ENCODE measurements at regions of chr10 and their contacts with region 1.

Region 1: GRCh38 chr10:88064608-88065382 is 201.4 kb downstream of the PTEN start:
- DNase-seq: peak; percentile 38
- CTCF ChIP-seq: no peak

Region 2: DNA sequence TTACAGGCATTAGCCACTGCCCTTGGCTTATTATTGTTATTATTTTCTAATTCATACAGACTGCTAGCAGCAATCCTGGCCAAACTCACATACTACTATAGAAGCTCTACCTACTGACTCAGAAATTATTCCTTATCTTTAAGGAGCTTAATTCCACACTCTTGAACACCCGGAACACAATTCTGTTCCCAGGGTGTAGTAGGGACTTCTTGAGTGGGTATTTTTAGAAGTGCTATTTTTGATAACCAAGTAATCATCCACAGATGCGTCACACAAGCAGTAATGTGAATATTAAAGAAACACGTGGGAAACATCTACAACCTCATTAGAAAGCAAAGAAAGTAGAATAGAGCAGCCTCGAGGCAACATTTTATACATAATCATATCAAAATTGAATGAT is 52.2 kb before region 1 on chr10:
- CTCF ChIA-PET with region 1: no interaction called
- POLR2A ChIA-PET with region 1: no interaction called
- DNase-seq: no peak
- CTCF ChIP-seq: no peak

Region 3: GRCh38 chr10:88032566-88032965 is 32.2 kb before region 1 on chr10:
- CTCF ChIA-PET with region 1: no interaction called
- POLR2A ChIA-PET with region 1: no interaction called
- DNase-seq: no peak
- CTCF ChIP-seq: no peak

Region 4: GRCh38 chr10:88052779-88053178 is 12.0 kb before region 1 on chr10:
- CTCF ChIA-PET with region 1: interaction called, 17 read pairs
- POLR2A ChIA-PET with region 1: no interaction called
- DNase-seq: no peak
- CTCF ChIP-seq: no peak

Region 5: DNA sequence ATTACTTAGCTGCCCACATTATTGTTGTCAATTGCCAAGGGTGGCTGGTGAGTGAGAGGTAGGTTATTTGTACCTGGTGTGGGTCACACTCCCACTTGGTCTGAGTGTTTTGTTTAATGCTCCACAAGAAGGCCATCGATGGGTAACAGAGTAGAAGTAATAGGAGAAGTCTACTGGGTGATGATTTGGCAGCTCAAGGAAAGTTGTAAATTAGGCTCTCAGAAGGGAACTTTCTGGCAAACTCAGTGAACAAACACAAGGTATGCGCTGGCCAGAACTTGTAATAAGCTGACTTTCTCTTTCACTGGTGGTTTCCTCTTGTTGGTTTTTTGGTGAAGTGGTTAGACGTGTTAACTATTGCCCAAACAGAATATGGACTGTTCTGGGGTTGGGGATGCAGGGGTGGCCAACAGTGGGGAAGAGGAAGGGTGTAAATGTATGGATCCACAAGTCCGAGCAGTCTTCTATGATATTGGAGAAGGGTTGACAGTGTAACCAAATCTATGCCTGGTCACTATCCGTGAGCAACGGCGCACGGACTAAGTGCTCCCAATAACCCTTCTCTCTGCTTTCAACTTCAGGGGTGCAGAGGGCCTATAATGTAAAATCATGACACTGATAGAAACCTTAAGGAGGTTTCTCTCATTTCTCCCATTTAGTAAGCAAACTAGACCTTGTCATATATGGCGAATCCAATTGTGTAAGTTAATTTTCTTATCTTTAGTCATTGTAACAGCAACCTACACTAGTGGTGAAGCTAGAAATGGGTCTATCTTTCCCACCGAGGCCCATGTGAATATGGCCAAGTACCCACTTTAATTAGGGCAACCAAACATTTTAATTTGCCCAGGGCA is 11.5 kb after region 1 on chr10:
- CTCF ChIA-PET with region 1: interaction called, 19 read pairs
- POLR2A ChIA-PET with region 1: no interaction called
- DNase-seq: no peak
- CTCF ChIP-seq: no peak

Region 6: DNA sequence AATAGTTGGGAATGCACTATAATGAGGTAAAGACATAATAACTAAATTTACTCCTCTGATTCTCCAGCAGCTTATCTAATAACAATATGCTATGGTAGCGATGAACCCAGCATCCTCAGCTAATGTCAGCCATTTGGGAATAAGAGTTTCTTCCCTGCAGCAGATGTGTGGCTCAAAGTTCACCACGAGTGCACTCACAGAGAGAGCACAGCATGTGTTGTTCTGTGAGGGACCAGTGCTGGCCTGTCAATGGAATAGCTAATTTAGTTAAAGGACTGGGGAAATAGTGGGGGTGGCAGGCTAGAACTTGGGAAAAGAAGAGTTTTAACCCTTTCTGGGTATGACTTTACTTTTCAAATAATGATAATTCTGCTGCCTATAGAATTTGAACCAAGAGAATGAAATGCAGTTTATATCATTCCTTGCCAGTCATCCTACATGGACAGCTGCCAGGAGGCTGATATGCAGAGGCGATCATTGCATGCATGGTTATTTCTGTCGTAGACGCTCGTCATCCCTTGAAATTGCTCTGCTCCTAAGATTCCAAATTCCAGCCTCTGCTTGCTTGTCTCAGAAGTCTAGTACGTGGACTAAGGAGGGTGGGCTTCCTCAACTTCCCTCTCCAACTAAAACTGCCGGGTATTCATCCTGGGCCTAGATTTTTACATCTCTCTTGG is 162.7 kb after region 1 on chr10:
- CTCF ChIA-PET with region 1: no interaction called
- POLR2A ChIA-PET with region 1: no interaction called
- DNase-seq: no peak
- CTCF ChIP-seq: no peak

Measured in GM10248 (cell line).